MCF 10A (cell line): ENCODE measurements at regions of chr3 and their contacts with region 1.

Region 1: DNA sequence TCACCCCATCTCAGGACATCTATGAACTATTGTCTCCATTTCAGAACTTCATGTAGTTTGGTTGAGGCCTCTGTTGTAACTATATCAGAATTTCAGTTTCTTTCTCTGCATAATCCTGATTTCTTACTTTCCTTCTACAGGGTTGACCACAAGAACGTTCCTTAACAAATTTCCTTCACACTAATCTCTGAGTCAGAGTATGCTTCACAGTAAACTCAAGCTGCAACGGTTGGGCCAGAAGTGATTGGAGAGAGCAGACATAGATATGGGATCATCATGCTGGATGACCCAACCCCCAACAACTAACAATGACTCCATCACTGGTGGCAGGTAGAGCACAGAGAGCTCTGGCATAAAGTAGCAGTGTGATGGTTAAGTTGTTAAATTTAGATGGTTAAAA is 128.8 kb upstream of the OSTN start:
- DNase-seq: peak; percentile 67
- H3K4me3 Mint-ChIP-seq: no peak overlapping the region
- H3K27ac Mint-ChIP-seq: peak overlapping the region; percentile 57
- H3K4me1 Mint-ChIP-seq: peaks cover 36% of the 10 kb centered on the region
- H3K27me3 Mint-ChIP-seq: no peaks in the 10 kb centered on the region
- CTCF ChIP-seq: no peak

Region 2: DNA sequence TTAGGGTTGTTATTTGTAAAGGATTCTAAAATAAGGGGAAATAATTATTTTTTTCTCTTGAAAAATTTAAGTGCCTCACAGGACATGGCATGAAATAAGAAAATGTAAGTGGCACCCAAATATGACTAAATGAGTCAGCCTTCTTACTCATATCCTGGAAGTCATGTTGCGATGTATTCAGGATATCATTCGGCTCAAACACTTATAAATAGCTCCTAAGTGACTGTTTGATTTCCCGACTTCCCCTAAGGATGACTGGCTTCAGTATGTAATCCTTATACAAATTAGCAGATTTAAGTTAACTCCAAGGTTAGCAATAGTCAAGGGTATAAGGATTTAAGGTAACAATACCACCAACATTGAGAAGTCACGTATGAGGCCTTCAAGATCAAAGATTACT is 71.5 kb after region 1 on chr3:
- CTCF ChIA-PET with region 1: no interaction called
- POLR2A ChIA-PET with region 1: no interaction called
- intact Hi-C with region 1: loop called (anchors 1 kb)
- DNase-seq: peak; percentile 82
- H3K4me3 Mint-ChIP-seq: no peak overlapping the region
- H3K27ac Mint-ChIP-seq: peak overlapping the region; percentile 41
- H3K4me1 Mint-ChIP-seq: peaks cover 10% of the 10 kb centered on the region
- H3K27me3 Mint-ChIP-seq: no peaks in the 10 kb centered on the region
- CTCF ChIP-seq: no peak